ENCODE measurements at regions of chr6 and their contacts with region 1.

Region 1: DNA sequence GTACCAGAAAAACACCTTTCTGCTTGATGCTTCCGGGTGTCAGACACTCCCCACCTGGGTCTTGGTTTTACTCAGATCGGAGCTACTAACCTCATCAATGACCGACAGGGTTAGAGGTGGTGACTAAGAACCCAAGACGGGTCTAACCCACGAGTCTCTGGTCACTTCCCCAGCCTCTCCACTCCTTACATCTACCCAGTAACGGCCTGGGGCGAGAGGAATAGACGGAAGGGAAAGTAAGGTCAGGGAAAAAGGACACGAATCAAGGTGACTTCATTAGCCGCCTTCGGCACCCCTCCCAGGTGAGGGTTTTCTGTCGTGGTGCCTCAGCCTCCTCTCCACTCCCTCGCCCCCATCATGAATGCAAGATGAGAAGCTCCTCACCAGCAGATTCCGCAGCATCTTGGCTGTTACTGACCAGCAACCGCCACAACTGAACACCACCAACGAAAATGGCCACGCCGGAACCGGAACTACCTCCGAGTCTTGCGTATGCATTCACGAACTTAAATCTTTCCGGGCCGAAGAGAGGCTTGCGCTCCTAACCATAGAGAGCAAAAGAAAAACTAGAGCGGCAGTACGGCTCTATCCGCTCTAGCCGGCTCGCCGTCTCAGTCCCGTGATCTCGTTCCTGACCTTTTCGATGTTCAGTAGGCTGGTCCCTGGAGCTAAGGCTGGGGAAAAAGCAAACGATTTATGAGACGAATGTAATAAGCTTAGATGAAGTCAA is at the start of gene COX7A2:
- DNase-seq: peak; percentile 96
- H3K4me3 Mint-ChIP-seq: peak within 1 kb of the TSS; percentile 94
- H3K27ac Mint-ChIP-seq: peak within 1 kb of the TSS; percentile 95
- H3K4me1 Mint-ChIP-seq: peaks cover 24% of the 10 kb centered on the region
- H3K27me3 Mint-ChIP-seq: peaks cover 15% of the 10 kb centered on the region
- total RNA-seq, gene COX7A2: 490 and 538 TPM in 2 replicates

Region 2: GRCh38 chr6:75217193-75217592 is 26.3 kb before region 1 on chr6:
- intact Hi-C with region 1: loop called (anchors 1 kb)
- DNase-seq: no peak
- H3K4me3 Mint-ChIP-seq: peak overlapping the region; percentile 10
- H3K27ac Mint-ChIP-seq: peak overlapping the region; percentile 72
- H3K4me1 Mint-ChIP-seq: peaks cover 16% of the 10 kb centered on the region
- H3K27me3 Mint-ChIP-seq: peaks cover 19% of the 10 kb centered on the region